ENCODE measurements at regions of chr16 and their contacts with region 1.

Region 1: GRCh38 chr16:8173111-8173644 is 417.1 kb downstream of the TMEM114 start:
- DNase-seq: peak; percentile 58
- H3K4me3 ChIP-seq: no peak overlapping the region
- H3K27ac ChIP-seq: no peak overlapping the region
- H3K4me1 ChIP-seq: no peaks in the 10 kb centered on the region
- H3K27me3 ChIP-seq: no peaks in the 10 kb centered on the region
- CTCF ChIP-seq: peak; percentile 83

Region 2: DNA sequence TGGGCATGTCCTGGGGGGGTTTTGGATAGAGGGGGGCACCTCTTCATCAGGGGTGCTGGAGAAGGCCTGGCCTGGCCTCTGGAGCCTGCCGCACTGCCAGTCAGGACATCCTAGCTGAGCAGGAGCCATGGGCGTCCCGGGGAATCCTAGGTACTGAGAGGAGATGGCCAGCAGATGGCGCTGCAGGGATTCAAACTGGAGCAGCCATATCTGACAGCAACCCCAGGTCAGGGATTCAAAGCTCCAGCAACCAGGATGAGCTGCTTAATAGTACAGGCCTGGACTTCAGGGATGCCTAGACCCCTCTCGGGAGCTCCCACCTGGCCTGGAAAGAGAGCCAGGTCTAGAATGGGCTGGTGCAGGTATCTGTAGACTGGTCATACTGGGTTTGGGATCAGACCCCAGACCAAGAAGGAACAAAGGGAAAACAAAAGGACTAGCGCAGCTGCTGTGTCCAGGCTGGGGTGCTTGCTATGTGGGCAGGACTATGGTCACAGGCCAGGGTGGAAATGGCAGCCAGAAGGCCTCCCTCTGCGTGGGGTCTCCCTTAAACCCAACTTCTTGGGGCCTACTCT is 1147.5 kb before region 1 on chr16:
- intact Hi-C with region 1: loop called (anchors 5 kb)
- DNase-seq: peak; percentile 75
- H3K4me3 ChIP-seq: no peak overlapping the region
- H3K27ac ChIP-seq: no peak overlapping the region
- H3K4me1 ChIP-seq: no peaks in the 10 kb centered on the region
- H3K27me3 ChIP-seq: no peaks in the 10 kb centered on the region
- CTCF ChIP-seq: peak; percentile 51

Measured in colonic mucosa (tissue), 4 donors.